IMR-90 (cell line): ENCODE measurements at regions of chr3 and their contacts with region 1.

Region 1: DNA sequence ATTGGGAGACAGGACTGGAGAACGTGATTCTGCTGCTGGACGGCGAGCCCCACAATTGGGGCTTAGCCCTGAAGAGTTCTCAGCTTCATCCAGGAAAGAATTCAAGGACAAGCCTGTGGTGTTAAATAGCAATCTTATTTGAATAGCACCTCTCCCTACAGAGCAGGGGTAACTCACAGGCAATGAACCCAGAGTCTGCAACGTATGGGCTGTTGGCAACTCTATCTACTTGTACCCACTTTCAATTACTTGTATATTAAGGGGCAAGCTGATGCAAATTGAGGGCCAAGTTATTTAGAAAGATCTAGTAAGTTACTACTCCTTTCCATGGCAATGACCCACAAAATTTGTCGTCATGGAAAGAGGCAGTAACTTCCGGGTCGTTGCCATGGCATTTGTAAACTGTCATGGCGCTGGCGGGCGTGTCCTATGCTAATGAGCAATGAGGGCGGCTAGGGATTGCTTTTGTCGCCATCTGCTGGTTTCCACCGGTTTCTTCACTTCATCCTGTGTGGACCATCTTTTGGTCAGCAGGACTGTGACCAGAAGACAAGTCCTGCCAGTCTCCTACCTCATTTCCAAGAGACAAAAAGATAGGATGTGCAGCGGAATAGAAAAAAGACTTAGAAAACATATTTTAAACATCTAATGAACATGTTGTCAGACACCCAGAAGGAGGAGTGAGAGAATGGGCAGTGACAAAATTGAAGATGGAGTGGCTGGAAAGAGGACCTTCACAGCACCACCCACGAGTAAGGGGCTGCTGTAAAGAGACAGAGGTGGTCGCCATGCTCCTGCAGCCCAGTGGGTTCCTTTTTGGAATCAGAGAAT is 45.8 kb upstream of the SH3BP5 start:
- DNase-seq: peak; percentile 93
- ATAC-seq: peak; percentile 100
- H3K4me3 ChIP-seq: no peak overlapping the region
- H3K27ac ChIP-seq: no peak overlapping the region
- H3K4me1 ChIP-seq: no peaks in the 10 kb centered on the region
- H3K27me3 ChIP-seq: no peaks in the 10 kb centered on the region
- CTCF ChIP-seq: peak; percentile 95
- POLR2A ChIP-seq: 0 out of 2 replicates have a peak, but pooled peaks have one; percentile 30
- RAD21 ChIP-seq: peak; percentile 93

Region 2: DNA sequence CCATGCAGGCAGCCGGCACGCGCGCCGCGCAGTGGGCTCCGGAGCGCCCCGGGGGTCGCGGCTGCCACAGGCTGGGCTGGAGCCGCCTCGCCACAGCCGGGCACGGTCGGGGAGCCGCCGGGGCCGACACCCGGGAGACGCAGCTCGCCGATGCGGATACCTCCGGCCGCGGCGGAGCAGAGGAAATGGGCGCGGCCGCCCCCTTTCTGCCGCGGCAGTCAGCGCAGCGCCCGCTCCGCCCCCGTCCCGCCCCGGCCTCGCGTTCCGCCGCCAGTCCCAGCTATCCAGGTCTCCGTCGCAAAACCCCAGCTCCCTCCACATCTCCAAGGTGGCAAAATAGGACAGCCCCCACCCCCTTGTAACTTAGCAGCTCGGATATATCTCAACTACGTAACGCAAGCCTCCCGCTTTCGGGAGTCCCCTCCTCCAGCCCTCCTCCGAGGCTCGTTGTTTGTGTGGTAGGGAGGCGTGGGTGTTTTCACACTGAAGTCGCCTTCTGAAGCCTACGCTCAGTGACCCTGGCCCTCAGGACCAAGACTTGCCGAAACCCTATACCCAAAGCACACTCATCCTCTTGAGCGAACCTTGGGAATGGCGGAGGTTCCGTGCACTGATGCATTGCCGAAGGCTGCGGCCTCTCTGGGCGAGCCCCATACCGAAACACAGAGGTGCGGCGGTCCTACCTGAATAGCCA is 45.6 kb before region 1 on chr3 and contains the start of gene SH3BP5:
- CTCF ChIA-PET with region 1: no interaction called
- POLR2A ChIA-PET with region 1: no interaction called
- dilution Hi-C with region 1: no loop called
- in situ Hi-C with region 1: no loop called
- intact Hi-C with region 1: loop called (anchors 2 kb)
- DNase-seq: peak; percentile 47
- ATAC-seq: peak; percentile 95
- H3K4me3 ChIP-seq: peak within 1 kb of the TSS; percentile 86
- H3K27ac ChIP-seq: peak within 1 kb of the TSS; percentile 38; the same call in 1 of the 2 replicates
- H3K4me1 ChIP-seq: peaks cover 10% of the 10 kb centered on the region
- H3K27me3 ChIP-seq: no peaks in the 10 kb centered on the region
- CTCF ChIP-seq: peak; percentile 69
- POLR2A ChIP-seq: no peak
- RAD21 ChIP-seq: peak; percentile 62
- total RNA-seq, gene SH3BP5: 14.0 and 14.2 TPM in 2 replicates

Region 3: DNA sequence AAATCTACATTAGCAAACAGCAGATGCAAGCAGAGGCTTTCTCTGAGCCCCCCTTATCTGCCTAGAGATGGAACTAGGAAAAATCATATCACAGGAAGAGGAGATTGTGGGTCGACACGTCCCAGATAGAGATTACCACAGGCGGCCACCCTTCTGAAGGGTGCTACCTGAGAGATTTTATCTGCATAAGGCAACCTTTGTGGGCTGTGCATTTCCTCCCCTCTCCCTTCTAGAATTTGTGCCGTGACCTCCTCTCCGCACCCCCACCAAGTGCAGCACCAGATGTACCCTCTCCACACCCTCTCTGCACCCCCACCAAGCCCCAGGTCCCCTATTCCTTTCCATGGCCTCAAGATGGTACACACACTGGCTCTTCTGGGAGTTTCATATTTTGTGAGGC is 21.8 kb after region 1 on chr3:
- CTCF ChIA-PET with region 1: no interaction called
- POLR2A ChIA-PET with region 1: no interaction called
- dilution Hi-C with region 1: no loop called
- in situ Hi-C with region 1: no loop called
- intact Hi-C with region 1: no loop called
- DNase-seq: no peak
- ATAC-seq: no peak
- H3K4me3 ChIP-seq: no peak overlapping the region
- H3K27ac ChIP-seq: no peak overlapping the region
- H3K4me1 ChIP-seq: no peaks in the 10 kb centered on the region
- H3K27me3 ChIP-seq: no peaks in the 10 kb centered on the region
- CTCF ChIP-seq: no peak
- POLR2A ChIP-seq: no peak
- RAD21 ChIP-seq: no peak